Heart right ventricle (tissue), 16 donors: ENCODE measurements at regions of chr3 and their contacts with region 1.

Region 1: DNA sequence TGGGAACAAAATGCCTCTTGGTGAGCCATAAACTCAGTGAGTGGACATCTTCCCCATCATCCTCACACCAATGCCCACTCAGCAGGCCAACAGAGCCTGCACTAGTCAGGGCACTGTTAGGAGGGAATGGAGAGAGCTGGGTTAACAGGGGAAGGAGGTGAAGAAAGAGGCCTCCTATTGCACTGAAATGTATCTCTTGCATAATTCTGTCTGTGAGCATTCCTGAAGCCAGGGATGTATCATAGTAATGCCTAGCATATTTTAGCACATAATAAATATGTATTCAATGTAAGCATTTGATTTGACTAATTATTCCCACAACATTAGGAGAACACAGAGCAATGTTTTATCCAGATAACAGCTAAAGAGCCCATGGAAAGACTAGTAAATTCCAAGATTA is 81.2 kb downstream of the ANO10 start:
- DNase-seq: no peak
- ATAC-seq: no peak
- H3K4me3 ChIP-seq: no peak overlapping the region
- H3K27ac ChIP-seq: no peak overlapping the region
- H3K4me1 ChIP-seq: no peaks in the 10 kb centered on the region
- H3K27me3 ChIP-seq: no peaks in the 10 kb centered on the region
- CTCF ChIP-seq: no peak

Region 2: GRCh38 chr3:43742920-43743319 is 202.3 kb after region 1 on chr3:
- intact Hi-C with region 1: loop called in 1 of 10 experiments (anchors 10 kb)
- DNase-seq: no peak
- ATAC-seq: peak in 6 of 8 donors; percentile 41 to 77 (median 58)
- H3K4me3 ChIP-seq: no peak overlapping the region
- H3K27ac ChIP-seq: no peak overlapping the region
- H3K4me1 ChIP-seq: peaks cover 0 to 15% (median 3%) of the 10 kb centered on the region in 9 donors
- H3K27me3 ChIP-seq: no peaks in the 10 kb centered on the region
- CTCF ChIP-seq: peak in 5 of 9 donors; percentile 6 to 30 (median 13)

Region 3: GRCh38 chr3:43855674-43856299 is 315.2 kb after region 1 on chr3:
- intact Hi-C with region 1: no loop called
- DNase-seq: peak; percentile 30 to 40
- ATAC-seq: peak in 7 of 8 donors; percentile 53 to 89 (median 73)
- H3K4me3 ChIP-seq: no peak overlapping the region
- H3K27ac ChIP-seq: no peak overlapping the region
- H3K4me1 ChIP-seq: no peaks in the 10 kb centered on the region
- H3K27me3 ChIP-seq: peaks cover 0 to 55% (median 42%) of the 10 kb centered on the region in 7 donors
- CTCF ChIP-seq: peak; percentile 21 to 69 (median 59)

Region 4: DNA sequence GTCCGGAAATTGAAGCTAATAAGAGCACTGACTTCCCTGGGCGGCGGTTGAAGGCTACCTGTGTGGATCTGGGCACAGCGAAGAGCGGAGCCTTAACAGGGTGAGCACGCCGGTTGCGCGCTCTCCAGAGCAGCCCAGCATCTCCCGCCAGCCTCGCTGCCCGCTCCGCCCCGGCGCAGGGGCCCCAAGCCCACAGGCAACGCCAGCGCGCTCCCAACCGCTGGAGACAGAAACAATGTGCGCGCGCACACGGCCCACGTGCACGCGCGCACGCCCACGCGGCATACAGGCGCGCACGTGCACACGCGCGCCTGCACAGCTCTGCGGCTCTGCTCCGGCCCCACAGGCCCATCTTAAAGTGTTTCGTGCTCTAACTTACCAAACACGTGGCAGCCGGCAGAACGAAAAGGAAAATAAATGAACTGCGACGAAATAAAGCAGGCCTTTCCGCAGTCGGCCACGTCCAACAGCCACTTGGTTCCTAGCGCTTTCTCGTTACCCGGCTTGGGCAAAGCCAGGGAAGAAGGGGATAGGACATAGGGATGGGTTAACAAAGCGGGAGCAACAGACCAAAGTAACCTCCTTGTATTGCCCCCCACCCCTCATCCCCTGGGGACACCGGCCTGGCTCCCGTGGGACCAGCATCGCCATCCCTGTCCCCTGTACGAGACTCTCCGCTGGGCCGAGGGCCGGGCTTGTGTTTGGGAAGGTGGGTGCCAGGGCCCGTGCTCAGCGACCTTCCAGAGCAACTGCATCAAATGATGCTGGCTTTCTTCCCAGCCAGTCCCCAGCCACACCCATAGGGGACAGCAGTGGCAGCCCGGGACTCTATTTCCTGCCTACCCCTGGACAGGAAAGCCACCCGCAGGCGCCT is 353.8 kb after region 1 on chr3:
- intact Hi-C with region 1: no loop called
- DNase-seq: peak; percentile 15 to 44
- ATAC-seq: peak; percentile 89 to 94 (median 91)
- H3K4me3 ChIP-seq: peak overlapping the region; percentile 18 to 58 (median 54)
- H3K27ac ChIP-seq: no peak overlapping the region
- H3K4me1 ChIP-seq: peaks cover 0 to 14% (median 11%) of the 10 kb centered on the region in 9 donors
- H3K27me3 ChIP-seq: peaks cover 0 to 66% (median 43%) of the 10 kb centered on the region in 7 donors
- CTCF ChIP-seq: no peak

Region 5: GRCh38 chr3:44198284-44199269 is 658.0 kb after region 1 on chr3:
- intact Hi-C with region 1: loop called (anchors 1 to 5 kb)
- DNase-seq: peak; percentile 18 to 78
- ATAC-seq: peak in 6 of 8 donors; percentile 73 to 82 (median 80)
- H3K4me3 ChIP-seq: no peak overlapping the region
- H3K27ac ChIP-seq: no peak overlapping the region
- H3K4me1 ChIP-seq: no peaks in the 10 kb centered on the region
- H3K27me3 ChIP-seq: peaks cover 0 to 42% (median 10%) of the 10 kb centered on the region in 7 donors
- CTCF ChIP-seq: peak; percentile 60 to 86 (median 82)